ENCODE measurements at regions of chr18 and their contacts with region 1.

Region 1: GRCh38 chr18:6885992-6886796 is 156.7 kb downstream of the ARHGAP28 start:
- DNase-seq: no peak
- ATAC-seq: peak; percentile 83

Region 2: DNA sequence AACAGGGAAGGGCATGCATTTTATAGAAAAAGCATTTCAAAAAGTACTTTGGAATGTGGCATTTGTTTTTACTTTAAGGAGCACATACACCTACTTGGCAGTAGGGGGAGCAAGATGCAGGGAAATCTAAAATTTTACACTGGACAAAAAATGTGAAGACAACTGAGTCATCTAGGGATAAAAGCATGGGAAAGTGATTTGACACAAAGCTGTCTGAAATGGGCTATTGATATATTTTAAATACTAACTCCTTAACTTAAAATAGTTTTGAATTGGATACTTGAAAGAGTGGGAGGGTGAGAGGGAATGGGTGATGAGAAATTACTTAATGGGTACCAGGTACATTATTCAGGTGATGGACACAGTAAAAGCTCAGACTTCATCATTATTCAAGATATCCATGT is 1006.7 kb before region 1 on chr18:
- intact Hi-C with region 1: loop called (anchors 10 kb)
- DNase-seq: no peak
- ATAC-seq: peak; percentile 38

Region 3: DNA sequence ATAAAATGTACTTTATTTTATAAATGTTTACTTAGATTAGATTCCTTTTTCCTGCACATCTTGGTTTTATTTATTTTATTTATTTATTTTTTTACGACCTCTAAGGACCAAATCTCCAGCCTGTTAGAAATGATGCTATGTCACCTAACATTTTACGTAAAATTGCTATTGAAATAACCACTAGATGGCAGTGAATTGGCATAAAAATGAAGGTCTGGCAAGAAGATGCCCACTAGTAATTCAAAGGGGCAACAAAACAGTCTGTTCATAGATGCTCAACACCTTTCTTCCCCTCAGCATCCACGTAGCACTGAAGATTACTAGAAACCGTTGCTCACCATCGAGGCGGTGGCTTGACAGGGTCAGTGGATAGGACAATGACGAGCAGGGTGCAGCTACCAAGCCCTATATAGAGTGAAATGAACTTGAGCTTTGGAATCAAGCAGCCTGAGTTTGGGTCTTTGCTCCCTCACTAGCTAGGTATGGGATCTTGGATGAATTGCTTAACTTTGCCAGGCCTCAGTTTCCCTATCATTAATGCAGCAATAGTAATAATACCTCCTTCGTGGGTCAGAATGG is 342.8 kb before region 1 on chr18:
- intact Hi-C with region 1: loop called (anchors 5 kb)
- DNase-seq: no peak
- ATAC-seq: no peak

Region 4: GRCh38 chr18:6729247-6730091 is 156.7 kb before region 1 on chr18 and contains the start of gene ARHGAP28:
- intact Hi-C with region 1: no loop called
- DNase-seq: peak; percentile 86
- ATAC-seq: peak; percentile 94
- total RNA-seq, gene ARHGAP28: 9.7 TPM

Measured in sciatic nerve (tissue), 2 donors.